Aorta (tissue), 5 donors: ENCODE measurements at regions of chr3 and their contacts with region 1.

Region 1: DNA sequence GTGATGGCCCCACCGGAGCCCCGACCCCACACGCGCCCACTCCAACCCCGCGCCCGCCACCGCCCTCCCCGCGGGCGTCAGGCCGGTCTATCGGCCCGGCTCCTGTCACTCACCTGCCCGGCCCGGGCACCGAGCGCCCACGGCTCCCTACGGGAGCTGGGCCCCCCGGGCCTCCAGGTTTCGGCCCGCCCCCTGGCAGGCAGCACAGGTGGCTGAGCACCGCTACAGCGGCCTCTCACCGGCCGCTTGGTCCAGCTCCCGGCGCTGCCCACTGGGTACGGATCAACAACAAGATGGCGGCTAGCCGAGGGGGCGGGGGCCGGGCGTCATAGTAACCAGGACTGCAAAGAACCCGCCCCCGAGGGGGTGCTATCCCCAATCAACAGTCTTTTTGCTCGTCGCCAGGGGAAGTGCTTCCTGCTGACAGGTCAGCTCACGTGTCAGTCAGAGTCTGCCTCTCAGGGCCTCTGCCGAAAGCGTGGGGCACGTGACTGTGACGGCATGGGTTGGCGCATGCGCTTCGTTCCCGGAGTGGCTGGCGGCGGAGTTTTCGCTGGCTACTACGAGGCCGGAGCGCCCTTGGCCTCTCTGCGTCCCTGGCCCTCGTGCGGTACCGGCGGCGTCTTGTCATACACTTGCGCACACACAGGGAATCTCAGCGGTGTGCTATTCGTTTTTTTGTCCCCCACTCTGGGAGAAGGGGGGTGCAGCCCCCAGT is at the start of gene IP6K1:
- DNase-seq: peak; percentile 100
- ATAC-seq: peak; percentile 100
- H3K4me3 ChIP-seq: peak within 1 kb of the TSS; percentile 97 to 99
- H3K27ac ChIP-seq: peak within 1 kb of the TSS; percentile 20 to 96
- H3K4me1 ChIP-seq: no peaks in the 10 kb centered on the region
- H3K27me3 ChIP-seq: no peaks in the 10 kb centered on the region
- total RNA-seq, gene IP6K1: 36.5 to 40.2 TPM

Region 2: GRCh38 chr3:49723628-49724551 is 62.5 kb before region 1 on chr3 and contains the start of gene GMPPB:
- intact Hi-C with region 1: loop called in 1 of 2 experiments (anchors 10 kb)
- DNase-seq: peak; percentile 99
- ATAC-seq: peak; percentile 95
- H3K4me3 ChIP-seq: peak within 1 kb of the TSS; percentile 75 to 83
- H3K27ac ChIP-seq: peak within 1 kb of the TSS in 1 of 2 donors; percentile 92
- H3K4me1 ChIP-seq: no peaks in the 10 kb centered on the region
- H3K27me3 ChIP-seq: no peaks in the 10 kb centered on the region
- total RNA-seq, gene GMPPB: 29.2 to 39.6 TPM